ENCODE measurements at regions of chr9 and their contacts with region 1.

Region 1: GRCh38 chr9:121839726-121840500 is 188.5 kb downstream of the DAB2IP start:
- DNase-seq: peak in 1 of 2 experiments; percentile 31
- H3K4me3 ChIP-seq: no peak overlapping the region
- H3K27ac ChIP-seq: no peak overlapping the region
- H3K4me1 ChIP-seq: no peaks in the 10 kb centered on the region; a peak in 1 of 7 replicates
- H3K27me3 ChIP-seq: no peaks in the 10 kb centered on the region
- CTCF ChIP-seq: no peak
- EP300 ChIP-seq: no peak
- POLR2A ChIP-seq: no peak
- RAD21 ChIP-seq: no peak

Region 2: DNA sequence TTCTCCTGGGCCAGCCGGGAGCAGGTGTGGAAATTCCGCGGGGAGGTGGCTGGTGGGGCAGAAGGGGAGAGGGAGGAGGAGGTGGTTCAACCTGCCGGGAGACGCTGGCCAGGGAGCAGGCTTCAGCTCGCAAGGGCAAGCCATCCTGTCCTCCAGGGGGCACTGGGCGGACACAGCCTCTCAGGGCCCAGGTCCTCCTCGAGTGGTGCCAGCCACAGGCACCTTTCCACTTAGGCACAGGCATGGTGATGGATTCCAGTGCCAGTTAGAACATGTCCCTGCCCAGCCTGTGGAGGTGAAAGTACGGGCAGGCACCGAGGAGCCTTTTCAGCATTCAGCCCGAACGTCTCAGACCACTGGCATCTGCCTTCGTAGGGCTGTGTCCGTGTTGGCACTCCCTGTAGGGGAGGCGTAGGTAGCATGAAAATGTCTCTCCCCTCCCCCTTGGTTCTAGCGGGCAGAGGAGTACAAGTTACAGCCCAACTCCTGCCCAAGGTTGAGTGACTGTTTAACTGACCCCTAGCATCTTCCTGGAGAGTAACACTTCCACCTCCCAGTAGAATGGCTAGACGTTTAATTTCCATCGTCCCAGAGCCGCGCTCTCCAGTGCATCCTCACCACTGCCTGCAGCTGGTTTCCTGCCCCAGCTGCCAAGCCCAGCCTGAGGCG is 139.6 kb before region 1 on chr9:
- CTCF ChIA-PET with region 1: no interaction called
- POLR2A ChIA-PET with region 1: no interaction called
- DNase-seq: peak in 1 of 2 experiments; percentile 77
- H3K4me3 ChIP-seq: peak overlapping the region; percentile 54 to 66 (median 61); a peak in 7 of 8 replicates
- H3K27ac ChIP-seq: no peak overlapping the region
- H3K4me1 ChIP-seq: peaks cover 9 to 15% (median 12%) of the 10 kb centered on the region in 4 experiments
- H3K27me3 ChIP-seq: peaks cover 0 to 5% (median 0%) of the 10 kb centered on the region in 4 experiments; a peak in 4 of 7 replicates
- CTCF ChIP-seq: peak; percentile 47 to 84 (median 74)
- EP300 ChIP-seq: no peak
- POLR2A ChIP-seq: no peak
- RAD21 ChIP-seq: peak; percentile 44 to 51

Region 3: DNA sequence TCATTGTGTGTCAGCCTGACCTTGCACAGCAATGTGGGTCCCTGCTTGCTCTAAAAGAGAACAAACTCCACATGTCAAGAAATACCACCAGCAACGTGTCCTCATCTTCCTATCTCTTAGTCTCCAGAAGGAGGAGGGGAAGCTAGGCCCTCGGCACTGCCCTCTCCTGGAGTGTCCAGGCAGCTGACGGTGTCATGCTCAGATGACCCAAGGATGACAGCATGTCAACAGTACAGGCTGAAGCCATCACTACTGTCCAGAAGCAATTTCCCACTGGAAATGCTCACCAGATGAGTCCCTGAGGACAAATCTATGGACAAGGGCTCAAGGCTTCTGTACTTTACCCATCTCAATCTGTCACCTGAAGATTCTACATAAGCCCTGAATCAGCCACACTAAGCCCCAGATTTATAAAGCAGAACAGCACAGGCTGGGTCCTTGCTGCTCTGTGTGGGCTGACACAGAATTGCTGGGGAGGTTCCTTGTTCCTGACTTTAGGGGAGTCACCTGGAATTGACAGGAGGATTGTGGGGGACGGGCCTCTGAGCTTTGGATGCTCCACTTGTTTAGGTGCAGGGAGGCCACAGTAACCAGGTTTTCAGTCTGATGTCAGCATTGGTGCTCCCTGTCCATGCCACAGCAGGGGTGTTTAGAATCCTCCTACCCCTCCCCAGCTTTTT is 21.7 kb after region 1 on chr9:
- CTCF ChIA-PET with region 1: interaction called, 20 read pairs
- POLR2A ChIA-PET with region 1: no interaction called
- DNase-seq: peak in 1 of 2 experiments; percentile 57
- H3K4me3 ChIP-seq: no peak overlapping the region
- H3K27ac ChIP-seq: no peak overlapping the region
- H3K4me1 ChIP-seq: peaks cover 0 to 8% (median 2%) of the 10 kb centered on the region in 4 experiments; a peak in 6 of 7 replicates
- H3K27me3 ChIP-seq: no peaks in the 10 kb centered on the region
- CTCF ChIP-seq: peak; percentile 81 to 91 (median 91)
- EP300 ChIP-seq: no peak
- POLR2A ChIP-seq: no peak
- RAD21 ChIP-seq: peak; percentile 64 to 77